ENCODE measurements at regions of chr10 and their contacts with region 1.

Region 1: DNA sequence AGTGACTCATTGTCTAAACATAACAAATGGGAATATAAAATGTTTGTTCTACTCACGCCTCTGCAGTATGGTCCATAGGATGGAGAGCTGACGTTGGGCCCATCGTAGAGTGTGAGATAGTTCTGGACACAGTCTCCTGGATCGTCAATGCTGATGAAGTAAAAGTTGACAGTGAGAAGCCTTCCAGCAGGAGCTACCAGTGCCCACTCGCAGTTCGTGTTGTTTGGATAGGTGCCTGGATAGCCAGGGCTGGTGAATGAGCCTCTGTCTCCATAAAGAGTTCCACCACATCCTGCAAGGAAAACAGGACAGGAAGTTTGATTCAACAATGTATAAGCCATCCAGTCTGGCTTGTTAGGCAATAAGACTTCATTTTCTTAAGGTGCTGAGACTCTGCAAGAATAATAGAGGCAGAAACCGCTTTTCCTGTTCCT is 79.6 kb downstream of the OR13A1 start:
- DNase-seq: no peak
- H3K4me3 Mint-ChIP-seq: no peak overlapping the region
- H3K27ac Mint-ChIP-seq: no peak overlapping the region
- H3K4me1 Mint-ChIP-seq: peaks cover 12% of the 10 kb centered on the region
- H3K27me3 Mint-ChIP-seq: peaks cover 13% of the 10 kb centered on the region

Region 2: GRCh38 chr10:45008524-45009161 is 227.2 kb before region 1 on chr10:
- intact Hi-C with region 1: loop called (anchors 10 kb)
- DNase-seq: peak; percentile 81
- H3K4me3 Mint-ChIP-seq: no peak overlapping the region
- H3K27ac Mint-ChIP-seq: no peak overlapping the region
- H3K4me1 Mint-ChIP-seq: peaks cover 3% of the 10 kb centered on the region
- H3K27me3 Mint-ChIP-seq: peaks cover 3% of the 10 kb centered on the region

Region 3: DNA sequence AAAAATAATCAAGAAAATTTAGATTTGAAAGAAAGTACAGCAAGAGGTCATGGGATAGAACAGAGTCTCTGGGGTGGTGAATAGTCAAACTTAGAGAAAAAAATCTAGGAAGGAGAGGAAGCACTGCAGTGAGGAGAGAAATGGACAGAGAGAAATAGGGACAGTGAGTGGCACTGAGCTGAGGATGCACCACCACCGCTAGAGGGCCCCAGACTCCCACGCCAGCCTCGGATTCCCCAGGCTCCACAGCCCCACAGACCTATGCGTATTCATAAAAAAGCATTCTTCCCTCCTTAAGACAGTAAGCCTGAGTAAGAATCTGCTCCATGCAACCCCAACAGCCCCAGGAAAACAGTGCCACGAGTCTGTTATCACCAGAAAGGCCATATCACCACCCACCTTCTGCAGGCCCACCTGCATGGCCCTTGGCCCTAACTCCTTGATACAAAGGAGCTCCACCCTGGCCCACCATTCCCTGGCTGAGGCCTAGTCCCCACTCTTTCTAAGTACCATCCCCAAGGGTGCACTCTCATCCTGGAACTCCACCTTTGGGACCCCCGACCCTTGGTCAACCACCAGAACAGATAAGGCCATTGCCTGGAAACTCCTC is 229.2 kb after region 1 on chr10:
- intact Hi-C with region 1: loop called (anchors 5 kb)
- DNase-seq: peak; percentile 92
- H3K4me3 Mint-ChIP-seq: no peak overlapping the region
- H3K27ac Mint-ChIP-seq: no peak overlapping the region
- H3K4me1 Mint-ChIP-seq: peaks cover 39% of the 10 kb centered on the region
- H3K27me3 Mint-ChIP-seq: no peaks in the 10 kb centered on the region